Left lung (tissue), 14 donors: ENCODE measurements at regions of chr9 and their contacts with region 1.

Region 1: GRCh38 chr9:6197330-6197729 is 18.3 kb upstream of the IL33 start:
- DNase-seq: peak in 1 of 4 donors; percentile 15
- ATAC-seq: peak; percentile 74
- H3K4me3 ChIP-seq: no peak overlapping the region
- H3K27ac ChIP-seq: peak overlapping the region in 1 of 2 donors; percentile 24
- H3K4me1 ChIP-seq: peaks cover 0 to 15% of the 10 kb centered on the region in 2 donors
- H3K27me3 ChIP-seq: no peaks in the 10 kb centered on the region
- CTCF ChIP-seq: peak; percentile 11 to 39

Region 2: GRCh38 chr9:6080154-6080716 is 117.1 kb before region 1 on chr9:
- intact Hi-C with region 1: no loop called
- DNase-seq: peak; percentile 65 to 92 (median 90)
- ATAC-seq: peak; percentile 98
- H3K4me3 ChIP-seq: peak overlapping the region; percentile 32 to 36
- H3K27ac ChIP-seq: peak overlapping the region; percentile 35 to 39
- H3K4me1 ChIP-seq: no peaks in the 10 kb centered on the region
- H3K27me3 ChIP-seq: no peaks in the 10 kb centered on the region
- CTCF ChIP-seq: no peak

Region 3: DNA sequence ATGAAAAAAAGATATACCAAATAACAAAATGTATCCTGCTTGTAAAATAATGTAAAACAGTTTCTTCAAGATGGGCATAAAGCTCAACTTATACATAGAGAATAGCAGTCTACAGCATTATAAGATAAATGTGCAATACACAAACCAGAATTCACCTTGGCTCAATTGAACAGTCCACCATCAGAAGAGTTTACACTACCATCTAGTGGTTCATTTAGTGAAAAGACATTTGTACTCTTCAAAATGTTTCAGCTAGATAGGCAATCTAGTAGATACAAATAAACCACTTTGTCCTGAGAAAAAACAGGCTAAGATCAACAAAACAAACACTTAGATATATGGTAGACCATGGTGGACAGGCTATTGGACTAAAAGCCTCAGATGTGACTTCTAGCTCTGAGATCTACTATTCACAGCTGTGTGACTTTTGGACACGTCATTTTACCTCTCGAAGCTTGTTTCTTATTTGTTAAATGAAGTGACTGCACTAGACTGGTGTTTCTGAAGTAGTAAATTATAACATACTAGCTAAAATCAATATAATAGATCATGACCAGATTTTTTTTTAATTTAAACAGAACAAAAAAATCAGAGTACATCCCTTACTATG is 108.7 kb after region 1 on chr9:
- intact Hi-C with region 1: loop called in 1 of 2 experiments (anchors 5 kb)
- DNase-seq: peak in 2 of 4 donors; percentile 11 to 33
- ATAC-seq: peak; percentile 91
- H3K4me3 ChIP-seq: no peak overlapping the region
- H3K27ac ChIP-seq: no peak overlapping the region
- H3K4me1 ChIP-seq: no peaks in the 10 kb centered on the region
- H3K27me3 ChIP-seq: no peaks in the 10 kb centered on the region
- CTCF ChIP-seq: peak; percentile 28 to 53